A549 (cell line): ENCODE measurements at regions of chr20 and their contacts with region 1.

Region 1: GRCh38 chr20:17617551-17618223 is 47.8 kb downstream of the DSTN start:
- DNase-seq: peak; percentile 74 to 83
- ATAC-seq: peak; percentile 64 to 72
- H3K4me3 ChIP-seq: no peak overlapping the region
- H3K27ac ChIP-seq: no peak overlapping the region
- H3K4me1 ChIP-seq: peaks cover 12% of the 10 kb centered on the region; the same call in 2 of the 3 replicates
- CTCF ChIP-seq: peak; percentile 87
- EP300 ChIP-seq: no peak
- POLR2A ChIP-seq: no peak
- RAD21 ChIP-seq: peak; percentile 97 to 99

Region 2: GRCh38 chr20:17511401-17511800 is 106.3 kb before region 1 on chr20:
- CTCF ChIA-PET with region 1: interaction called, 230 read pairs
- POLR2A ChIA-PET with region 1: interaction called, 6 read pairs
- DNase-seq: no peak
- ATAC-seq: no peak
- H3K4me3 ChIP-seq: no peak overlapping the region
- H3K27ac ChIP-seq: no peak overlapping the region
- H3K4me1 ChIP-seq: no peaks in the 10 kb centered on the region
- CTCF ChIP-seq: no peak
- EP300 ChIP-seq: no peak
- POLR2A ChIP-seq: no peak
- RAD21 ChIP-seq: no peak

Region 3: DNA sequence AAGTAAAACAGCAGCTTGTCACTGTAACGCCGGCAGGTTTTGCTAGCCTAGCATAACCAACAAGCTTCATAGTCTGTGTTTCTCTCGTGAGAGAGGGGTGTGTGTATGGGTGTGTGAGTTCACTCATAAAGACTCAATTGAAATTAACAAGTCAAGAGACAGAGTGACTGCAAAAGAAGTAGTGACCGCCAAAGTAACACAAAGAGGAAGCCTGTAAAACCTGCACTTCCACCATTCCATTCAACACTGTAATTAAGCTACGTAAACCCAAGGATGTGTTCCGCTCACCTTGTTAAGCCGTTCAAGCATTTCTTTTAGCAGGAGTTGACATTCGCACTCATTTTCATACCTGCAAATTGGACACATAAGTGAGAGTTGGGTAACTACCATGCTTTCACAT is 93.1 kb before region 1 on chr20:
- CTCF ChIA-PET with region 1: interaction called, 501 read pairs
- POLR2A ChIA-PET with region 1: no interaction called
- DNase-seq: no peak
- ATAC-seq: no peak
- H3K4me3 ChIP-seq: no peak overlapping the region
- H3K27ac ChIP-seq: no peak overlapping the region
- H3K4me1 ChIP-seq: no peaks in the 10 kb centered on the region
- CTCF ChIP-seq: no peak
- EP300 ChIP-seq: no peak
- POLR2A ChIP-seq: no peak
- RAD21 ChIP-seq: no peak

Region 4: DNA sequence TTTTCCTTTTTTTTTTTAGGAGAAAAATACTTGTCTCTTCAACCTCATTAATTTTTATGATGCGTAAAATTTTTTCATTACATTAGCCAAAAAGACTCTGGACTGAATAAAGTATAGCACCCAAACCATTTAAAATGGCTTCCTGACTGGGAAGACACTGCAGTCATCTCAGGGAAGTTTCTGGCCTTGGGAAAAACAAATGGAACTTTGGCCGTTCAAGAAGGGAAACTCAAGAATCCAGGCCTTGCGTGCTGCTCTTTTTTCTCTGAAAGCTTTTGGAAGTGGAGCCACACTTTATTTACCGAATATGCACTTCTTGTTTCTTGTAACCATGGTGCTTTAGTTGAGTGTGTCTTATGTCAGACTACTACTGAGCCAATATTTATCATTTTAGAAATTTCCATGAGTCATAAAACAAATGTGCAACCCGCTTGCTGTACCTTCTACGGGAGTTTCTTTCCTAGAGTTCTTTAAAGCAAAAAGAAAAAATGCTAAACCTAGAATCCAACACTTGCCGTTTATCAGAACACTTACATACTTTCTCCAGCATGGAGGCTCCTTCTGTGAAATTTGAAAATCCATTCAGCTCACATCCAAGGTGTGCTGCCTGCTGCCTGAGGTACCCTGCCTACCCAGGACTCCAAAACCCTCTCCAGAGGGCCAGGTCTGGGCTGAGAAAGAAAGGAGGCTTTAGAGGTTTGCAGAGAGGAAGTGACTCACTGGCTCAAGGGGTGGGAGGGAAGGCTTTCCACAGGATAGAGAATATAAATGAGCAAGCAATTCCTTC is 59.3 kb before region 1 on chr20:
- CTCF ChIA-PET with region 1: interaction called, 16 read pairs
- POLR2A ChIA-PET with region 1: no interaction called
- DNase-seq: peak; percentile 92 to 93
- ATAC-seq: peak; percentile 92 to 94
- H3K4me3 ChIP-seq: peak overlapping the region; percentile 26
- H3K27ac ChIP-seq: peak overlapping the region; percentile 89 to 96
- H3K4me1 ChIP-seq: peaks cover 62% of the 10 kb centered on the region
- CTCF ChIP-seq: no peak
- EP300 ChIP-seq: peak in 1 of 2 experiments; percentile 65; a peak in 2 of 5 replicates
- POLR2A ChIP-seq: peak; percentile 53
- RAD21 ChIP-seq: no peak; a peak in 4 of 5 replicates

Region 5: GRCh38 chr20:17594443-17594842 is 23.2 kb before region 1 on chr20:
- CTCF ChIA-PET with region 1: interaction called, 28 read pairs
- POLR2A ChIA-PET with region 1: no interaction called
- DNase-seq: no peak
- ATAC-seq: no peak; a peak in 1 of 6 replicates
- H3K4me3 ChIP-seq: no peak overlapping the region
- H3K27ac ChIP-seq: no peak overlapping the region
- H3K4me1 ChIP-seq: peaks cover 32% of the 10 kb centered on the region
- CTCF ChIP-seq: no peak
- EP300 ChIP-seq: no peak
- POLR2A ChIP-seq: no peak
- RAD21 ChIP-seq: no peak

Region 6: DNA sequence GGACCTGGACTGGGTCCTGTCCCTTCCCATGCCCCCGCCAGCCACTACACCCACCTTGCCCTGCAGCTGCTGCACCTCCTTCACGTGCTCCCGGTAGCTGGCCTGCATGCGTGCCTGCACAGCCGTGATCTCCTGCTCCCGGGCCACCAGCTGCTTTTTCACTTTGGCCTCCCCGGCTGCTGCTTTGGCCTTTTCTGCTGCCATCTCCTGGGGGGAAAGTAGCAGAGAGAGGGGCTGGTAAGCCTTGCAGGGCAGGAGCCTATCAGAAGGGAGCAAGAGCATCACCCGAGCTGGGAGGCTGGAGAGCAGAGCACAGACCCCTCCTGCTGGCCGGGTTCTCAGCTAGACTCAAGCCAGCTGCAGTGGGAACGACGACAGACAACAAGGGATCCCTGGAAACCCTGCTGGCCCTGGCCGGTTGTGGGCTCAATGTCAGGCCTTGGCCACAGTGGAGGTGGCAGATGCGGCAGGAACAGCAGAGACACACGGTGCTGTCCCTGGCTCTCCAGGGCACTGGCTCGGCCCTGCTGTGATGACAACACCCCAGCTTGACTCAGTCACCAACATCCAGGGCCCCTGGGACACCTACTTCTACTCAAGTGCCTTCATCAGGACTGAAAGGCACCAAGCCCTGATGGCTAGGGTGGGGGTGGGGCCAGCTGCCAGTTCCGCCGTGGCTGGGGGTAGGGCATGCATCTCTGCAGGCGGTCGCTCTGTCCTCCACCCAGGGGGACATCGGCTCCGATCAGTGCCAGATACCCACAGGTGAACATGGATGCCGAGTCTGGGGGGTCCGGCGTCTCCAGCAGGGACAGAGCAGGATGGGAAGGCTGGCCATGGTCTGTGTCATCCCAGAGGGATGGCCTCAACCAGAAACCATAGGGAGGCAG is 19.1 kb after region 1 on chr20:
- CTCF ChIA-PET with region 1: interaction called, 172 read pairs
- POLR2A ChIA-PET with region 1: no interaction called
- DNase-seq: no peak
- ATAC-seq: peak in 1 of 2 experiments; percentile 32; a peak in 3 of 6 replicates
- H3K4me3 ChIP-seq: no peak overlapping the region
- H3K27ac ChIP-seq: no peak overlapping the region
- H3K4me1 ChIP-seq: no peaks in the 10 kb centered on the region
- CTCF ChIP-seq: no peak
- EP300 ChIP-seq: no peak
- POLR2A ChIP-seq: no peak
- RAD21 ChIP-seq: no peak

Region 7: DNA sequence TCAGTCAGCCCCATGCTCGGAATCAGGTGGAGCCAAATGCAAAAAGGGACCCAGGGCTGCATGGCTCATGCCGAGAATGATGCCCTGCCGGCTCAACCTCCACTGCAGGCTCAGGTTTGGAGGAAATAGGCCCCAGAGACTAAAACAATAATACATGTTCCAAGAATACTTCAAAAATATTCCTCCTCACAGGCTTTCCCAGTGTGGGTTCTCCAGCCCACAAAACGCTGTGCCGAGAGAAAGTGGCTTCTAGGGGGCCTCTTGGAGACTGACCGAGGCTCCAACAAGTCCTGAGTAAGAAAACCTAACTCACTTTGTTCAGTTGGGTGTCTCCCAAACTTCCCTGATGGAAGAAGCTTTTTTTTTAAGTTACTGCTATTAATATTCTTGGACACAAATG is 155.9 kb after region 1 on chr20:
- CTCF ChIA-PET with region 1: no interaction called
- POLR2A ChIA-PET with region 1: no interaction called
- DNase-seq: no peak
- ATAC-seq: no peak
- H3K4me3 ChIP-seq: no peak overlapping the region
- H3K27ac ChIP-seq: no peak overlapping the region
- H3K4me1 ChIP-seq: no peaks in the 10 kb centered on the region
- CTCF ChIP-seq: no peak
- EP300 ChIP-seq: no peak
- POLR2A ChIP-seq: no peak
- RAD21 ChIP-seq: no peak

Region 8: GRCh38 chr20:17995967-17996819 is 378.5 kb after region 1 on chr20:
- CTCF ChIA-PET with region 1: interaction called, 14 read pairs
- POLR2A ChIA-PET with region 1: no interaction called
- DNase-seq: peak; percentile 58 to 66
- ATAC-seq: peak; percentile 64 to 81
- H3K4me3 ChIP-seq: no peak overlapping the region
- H3K27ac ChIP-seq: no peak overlapping the region
- H3K4me1 ChIP-seq: peaks cover 4% of the 10 kb centered on the region; the same call in 2 of the 3 replicates
- CTCF ChIP-seq: peak; percentile 98
- EP300 ChIP-seq: no peak
- POLR2A ChIP-seq: no peak
- RAD21 ChIP-seq: peak; percentile 90 to 92